ENCODE measurements at regions of chr4 and their contacts with region 1.

Region 1: DNA sequence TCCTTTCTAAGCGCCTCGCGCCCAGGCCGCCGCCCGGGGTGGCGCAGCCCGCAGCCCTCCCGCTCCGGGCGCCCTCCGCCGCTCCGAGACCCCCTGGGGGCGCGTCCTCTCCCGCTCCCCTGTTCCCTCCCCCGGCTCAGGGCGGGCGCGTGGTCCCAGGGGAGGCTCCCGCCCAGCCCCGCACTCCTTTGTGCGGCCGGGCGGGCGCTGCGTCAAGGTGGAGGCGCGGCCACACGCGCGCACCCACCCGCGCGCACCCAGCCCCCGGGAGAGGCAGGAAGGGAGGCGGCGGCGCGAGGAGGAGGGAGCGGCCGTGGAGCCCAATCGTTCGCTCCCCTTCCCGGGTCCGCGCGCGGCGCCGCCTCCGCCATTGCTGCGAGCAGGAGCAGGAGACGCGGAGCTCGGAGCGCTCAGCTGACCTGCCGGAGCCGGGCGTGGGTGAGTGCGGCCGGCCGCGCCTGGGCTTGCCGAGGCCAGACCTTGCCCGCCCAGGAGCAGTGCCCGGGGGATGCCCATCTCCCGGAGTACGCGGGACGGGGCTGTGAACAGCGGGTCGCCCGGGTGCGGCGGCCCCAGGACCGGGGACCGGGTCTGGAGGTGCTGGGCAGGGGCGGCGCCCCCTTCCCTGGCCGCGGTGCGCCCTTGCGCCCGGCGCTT is at the start of gene NSG1:
- DNase-seq: peak; percentile 67
- ATAC-seq: peak; percentile 63
- H3K4me3 Mint-ChIP-seq: peak within 1 kb of the TSS; percentile 73
- H3K27ac Mint-ChIP-seq: no peak within 1 kb of the TSS
- H3K4me1 Mint-ChIP-seq: peaks cover 8% of the 10 kb centered on the region
- H3K27me3 Mint-ChIP-seq: peaks cover 22% of the 10 kb centered on the region
- total RNA-seq, gene NSG1: 4.1 to 5.3 TPM

Region 2: GRCh38 chr4:3845094-3845749 is 541.6 kb before region 1 on chr4:
- CTCF ChIA-PET with region 1: no interaction called
- POLR2A ChIA-PET with region 1: no interaction called
- intact Hi-C with region 1: no loop called
- DNase-seq: no peak
- ATAC-seq: no peak
- H3K4me3 Mint-ChIP-seq: no peak overlapping the region
- H3K27ac Mint-ChIP-seq: no peak overlapping the region
- H3K4me1 Mint-ChIP-seq: no peaks in the 10 kb centered on the region
- H3K27me3 Mint-ChIP-seq: peaks cover 5% of the 10 kb centered on the region

Region 3: DNA sequence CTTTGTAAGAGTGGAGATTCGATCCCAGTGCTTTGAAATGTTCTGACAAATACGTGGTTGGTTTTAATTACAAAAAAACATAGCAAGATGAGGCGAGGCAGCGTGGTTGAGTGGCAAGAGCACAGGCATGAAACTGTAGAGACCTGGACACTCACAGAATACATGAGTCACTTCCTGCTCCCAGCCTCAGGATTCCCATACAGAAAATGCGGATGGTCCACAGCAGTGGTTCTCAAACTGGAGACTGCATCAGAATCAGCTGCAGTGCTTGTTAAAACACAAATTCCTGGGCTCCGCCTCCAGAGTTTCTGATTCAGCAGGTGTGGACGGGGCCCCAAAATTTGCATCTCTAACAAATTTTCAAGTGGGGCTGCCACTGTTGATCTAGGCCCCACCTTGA is 170.2 kb before region 1 on chr4:
- CTCF ChIA-PET with region 1: no interaction called
- POLR2A ChIA-PET with region 1: no interaction called
- intact Hi-C with region 1: no loop called
- DNase-seq: no peak
- ATAC-seq: no peak
- H3K4me3 Mint-ChIP-seq: no peak overlapping the region
- H3K27ac Mint-ChIP-seq: no peak overlapping the region
- H3K4me1 Mint-ChIP-seq: no peaks in the 10 kb centered on the region
- H3K27me3 Mint-ChIP-seq: peaks cover 13% of the 10 kb centered on the region

Region 4: DNA sequence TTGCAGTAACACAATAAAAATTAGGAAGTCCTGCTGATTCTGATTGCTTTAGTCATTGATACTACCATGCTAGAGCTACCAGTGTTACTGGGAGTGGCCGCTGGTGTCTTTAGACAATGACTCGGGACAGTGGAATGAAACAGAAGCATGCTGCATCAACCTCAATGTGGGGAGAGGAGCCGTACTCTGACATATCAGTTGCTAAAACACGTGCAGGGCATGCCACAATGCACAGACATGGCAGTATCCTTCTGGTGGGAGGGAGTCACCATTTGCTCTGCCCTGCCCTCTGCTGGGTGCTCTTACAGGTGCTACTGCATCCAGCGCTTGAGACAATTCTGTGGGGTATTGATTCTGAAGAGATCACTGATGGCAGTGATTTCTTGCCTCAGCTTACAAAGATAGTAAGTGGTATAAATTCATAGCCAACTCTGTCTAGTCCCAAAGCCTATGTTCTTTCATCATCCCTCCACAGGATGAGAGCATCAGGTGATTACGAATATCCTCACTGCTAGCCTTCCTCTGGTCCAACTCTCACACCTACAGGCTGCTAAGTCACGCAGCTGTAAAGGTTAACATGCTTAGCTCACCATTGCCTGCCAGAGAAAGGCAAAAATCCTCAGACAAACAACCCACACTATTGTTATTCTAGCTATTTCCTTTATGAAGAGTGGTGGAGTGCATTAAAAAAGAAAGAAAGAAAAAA is 43.8 kb after region 1 on chr4:
- CTCF ChIA-PET with region 1: interaction called, 3 read pairs
- POLR2A ChIA-PET with region 1: no interaction called
- intact Hi-C with region 1: loop called in 1 of 2 experiments (anchors 1 kb)
- DNase-seq: peak; percentile 80
- ATAC-seq: peak; percentile 96
- H3K4me3 Mint-ChIP-seq: no peak overlapping the region
- H3K27ac Mint-ChIP-seq: no peak overlapping the region
- H3K4me1 Mint-ChIP-seq: peaks cover 5% of the 10 kb centered on the region
- H3K27me3 Mint-ChIP-seq: no peaks in the 10 kb centered on the region

Region 5: GRCh38 chr4:4575273-4576211 is 188.7 kb after region 1 on chr4:
- CTCF ChIA-PET with region 1: no interaction called
- POLR2A ChIA-PET with region 1: no interaction called
- intact Hi-C with region 1: loop called in 1 of 2 experiments (anchors 1 kb)
- DNase-seq: peak; percentile 78
- ATAC-seq: peak; percentile 86
- H3K4me3 Mint-ChIP-seq: peak overlapping the region; percentile 60
- H3K27ac Mint-ChIP-seq: no peak overlapping the region
- H3K4me1 Mint-ChIP-seq: peaks cover 13% of the 10 kb centered on the region
- H3K27me3 Mint-ChIP-seq: no peaks in the 10 kb centered on the region

Region 6: GRCh38 chr4:4859390-4859842 is 472.6 kb after region 1 on chr4 and contains the start of gene MSX1:
- CTCF ChIA-PET with region 1: no interaction called
- POLR2A ChIA-PET with region 1: no interaction called
- intact Hi-C with region 1: loop called in 1 of 2 experiments (anchors 10 kb)
- DNase-seq: peak; percentile 76
- ATAC-seq: peak; percentile 86
- H3K4me3 Mint-ChIP-seq: peak within 1 kb of the TSS; percentile 38
- H3K27ac Mint-ChIP-seq: no peak within 1 kb of the TSS
- H3K4me1 Mint-ChIP-seq: peaks cover 40% of the 10 kb centered on the region
- H3K27me3 Mint-ChIP-seq: peaks cover 64% of the 10 kb centered on the region
- total RNA-seq, gene MSX1: 0.09 TPM in 1 of 2 experiments, not detected in the other